PC-9 (cell line): ENCODE measurements at regions of chr2 and their contacts with region 1.

Region 1: GRCh38 chr2:47065771-47066380 is 89.2 kb downstream of the STPG4 start:
- DNase-seq: peak; percentile 65 to 78
- H3K4me3 ChIP-seq: no peak overlapping the region
- H3K27ac ChIP-seq: peak overlapping the region; percentile 44
- H3K4me1 ChIP-seq: peaks cover 66% of the 10 kb centered on the region
- H3K27me3 ChIP-seq: no peaks in the 10 kb centered on the region
- CTCF ChIP-seq: no peak

Region 2: DNA sequence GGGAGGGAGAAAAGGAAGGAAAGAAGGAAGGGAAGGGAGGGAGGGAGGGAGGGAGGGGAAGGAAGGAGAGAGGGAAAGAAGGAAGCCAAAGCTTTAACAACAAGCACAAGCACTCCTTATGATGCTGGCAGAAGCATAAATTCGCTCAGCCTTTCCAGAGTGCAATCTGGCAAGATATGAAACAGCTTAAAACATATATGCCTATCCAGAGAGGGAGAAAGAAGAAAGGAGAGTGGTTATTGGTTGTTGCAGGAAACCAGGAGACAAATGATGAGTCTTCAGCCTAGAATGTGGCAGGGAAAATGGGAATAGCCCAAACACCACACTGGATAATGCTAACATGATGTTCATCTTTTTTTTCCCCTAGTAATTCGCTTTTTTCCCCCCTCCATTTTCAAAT is 25.2 kb after region 1 on chr2:
- CTCF ChIA-PET with region 1: interaction called, 9 read pairs
- POLR2A ChIA-PET with region 1: interaction called, 18 read pairs
- intact Hi-C with region 1: no loop called
- DNase-seq: no peak
- H3K4me3 ChIP-seq: no peak overlapping the region
- H3K27ac ChIP-seq: no peak overlapping the region
- H3K4me1 ChIP-seq: peaks cover 24% of the 10 kb centered on the region
- H3K27me3 ChIP-seq: no peaks in the 10 kb centered on the region
- CTCF ChIP-seq: no peak

Region 3: DNA sequence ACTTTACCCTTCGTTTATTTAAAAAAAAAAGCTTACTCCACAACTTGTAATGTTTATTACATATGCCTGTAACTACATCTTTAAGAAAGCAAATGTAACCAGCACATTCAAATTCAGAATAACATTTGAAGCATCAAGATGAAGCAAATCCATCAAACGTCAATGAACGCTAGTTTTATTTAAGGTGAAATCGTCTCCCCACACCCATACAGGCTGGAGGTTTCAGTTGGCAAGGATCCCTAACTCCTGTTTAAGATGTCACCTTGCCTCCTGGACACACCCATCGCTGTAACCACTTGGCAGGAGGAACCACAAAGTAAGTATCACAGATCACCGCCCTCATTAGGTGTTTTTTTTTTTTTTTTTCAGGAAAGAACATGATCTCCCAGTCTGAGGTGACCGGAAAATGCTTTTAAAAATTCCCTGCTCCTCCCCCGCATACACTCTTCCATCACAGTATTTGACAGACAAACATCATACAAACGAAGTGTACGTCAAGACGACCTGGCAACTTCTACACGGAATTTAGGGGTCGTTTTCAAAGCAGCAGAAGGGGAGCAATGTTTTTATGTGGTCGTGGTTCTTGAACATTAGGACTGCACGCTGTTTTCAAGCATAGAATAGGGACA is 109.0 kb after region 1 on chr2:
- CTCF ChIA-PET with region 1: no interaction called
- POLR2A ChIA-PET with region 1: interaction called, 10 read pairs
- intact Hi-C with region 1: no loop called
- DNase-seq: peak; percentile 74 to 98
- H3K4me3 ChIP-seq: peak overlapping the region; percentile 94
- H3K27ac ChIP-seq: peak overlapping the region; percentile 95
- H3K4me1 ChIP-seq: peaks cover 63% of the 10 kb centered on the region
- H3K27me3 ChIP-seq: no peaks in the 10 kb centered on the region
- CTCF ChIP-seq: no peak